Activated B cell treated with CpG ODN at 0.5 μM for 24 hours (primary cell): ENCODE measurements at regions of chr10 and their contacts with region 1.

Region 1: GRCh38 chr10:102678842-102679289 is 34.6 kb downstream of the TRIM8 start:
- DNase-seq: peak; percentile 34
- ATAC-seq: no peak
- H3K4me3 Mint-ChIP-seq: no peak overlapping the region
- H3K27ac Mint-ChIP-seq: no peak overlapping the region
- H3K4me1 Mint-ChIP-seq: peaks cover 34% of the 10 kb centered on the region
- H3K27me3 Mint-ChIP-seq: no peaks in the 10 kb centered on the region
- CTCF ChIP-seq: no peak

Region 2: GRCh38 chr10:102185811-102186527 is 492.9 kb before region 1 on chr10:
- CTCF ChIA-PET with region 1: no interaction called
- POLR2A ChIA-PET with region 1: no interaction called
- intact Hi-C with region 1: no loop called
- DNase-seq: no peak
- ATAC-seq: peak; percentile 40
- H3K4me3 Mint-ChIP-seq: no peak overlapping the region
- H3K27ac Mint-ChIP-seq: no peak overlapping the region
- H3K4me1 Mint-ChIP-seq: peaks cover 16% of the 10 kb centered on the region
- H3K27me3 Mint-ChIP-seq: peaks cover 1% of the 10 kb centered on the region
- CTCF ChIP-seq: no peak

Region 3: DNA sequence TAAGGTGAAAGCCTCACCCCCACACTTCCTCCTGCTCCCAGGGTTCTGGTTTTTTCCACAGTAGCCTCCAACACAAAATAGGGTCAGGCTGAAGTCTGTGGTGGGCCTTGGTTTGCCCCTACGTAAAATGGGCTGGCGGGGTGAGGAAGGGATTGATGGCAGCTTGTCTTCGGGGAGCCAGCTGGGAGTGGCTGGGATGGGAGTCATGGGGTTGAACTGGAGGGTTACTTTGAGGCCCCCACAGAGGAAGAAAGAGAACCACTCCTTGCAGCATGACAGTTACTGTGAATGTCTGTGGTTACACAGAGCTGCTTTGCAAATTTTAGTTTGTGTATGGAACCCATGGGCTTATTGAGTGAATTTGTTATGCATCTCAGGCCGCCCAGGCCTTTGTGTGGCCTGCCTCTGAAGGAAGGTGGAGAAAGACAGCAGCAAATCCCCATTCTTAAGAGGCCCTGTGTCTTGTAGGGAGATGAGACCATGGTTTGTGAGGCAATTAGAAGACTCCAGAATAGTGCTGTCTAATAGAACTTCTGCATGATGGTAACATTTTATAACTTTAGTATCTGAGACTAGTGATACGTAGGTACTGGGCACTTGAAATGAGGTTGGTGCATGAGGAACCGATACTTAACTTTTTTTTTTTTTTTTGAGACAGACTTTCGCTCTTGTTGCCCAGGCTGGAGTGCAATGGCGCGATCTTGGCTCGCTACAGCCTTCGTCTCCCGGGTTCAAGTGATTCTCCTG is 26.5 kb before region 1 on chr10:
- CTCF ChIA-PET with region 1: interaction called, 3 read pairs
- POLR2A ChIA-PET with region 1: interaction called, 78 read pairs
- intact Hi-C with region 1: loop called (anchors 2 kb)
- DNase-seq: no peak
- ATAC-seq: peak; percentile 57
- H3K4me3 Mint-ChIP-seq: peak overlapping the region; percentile 78
- H3K27ac Mint-ChIP-seq: peak overlapping the region; percentile 98
- H3K4me1 Mint-ChIP-seq: peaks cover 68% of the 10 kb centered on the region
- H3K27me3 Mint-ChIP-seq: no peaks in the 10 kb centered on the region
- CTCF ChIP-seq: no peak

Region 4: GRCh38 chr10:102660888-102661657 is 17.8 kb before region 1 on chr10:
- CTCF ChIA-PET with region 1: interaction called, 3 read pairs
- POLR2A ChIA-PET with region 1: interaction called, 13 read pairs
- intact Hi-C with region 1: no loop called
- DNase-seq: no peak
- ATAC-seq: peak; percentile 78
- H3K4me3 Mint-ChIP-seq: no peak overlapping the region
- H3K27ac Mint-ChIP-seq: no peak overlapping the region
- H3K4me1 Mint-ChIP-seq: peaks cover 16% of the 10 kb centered on the region
- H3K27me3 Mint-ChIP-seq: no peaks in the 10 kb centered on the region
- CTCF ChIP-seq: no peak

Region 5: DNA sequence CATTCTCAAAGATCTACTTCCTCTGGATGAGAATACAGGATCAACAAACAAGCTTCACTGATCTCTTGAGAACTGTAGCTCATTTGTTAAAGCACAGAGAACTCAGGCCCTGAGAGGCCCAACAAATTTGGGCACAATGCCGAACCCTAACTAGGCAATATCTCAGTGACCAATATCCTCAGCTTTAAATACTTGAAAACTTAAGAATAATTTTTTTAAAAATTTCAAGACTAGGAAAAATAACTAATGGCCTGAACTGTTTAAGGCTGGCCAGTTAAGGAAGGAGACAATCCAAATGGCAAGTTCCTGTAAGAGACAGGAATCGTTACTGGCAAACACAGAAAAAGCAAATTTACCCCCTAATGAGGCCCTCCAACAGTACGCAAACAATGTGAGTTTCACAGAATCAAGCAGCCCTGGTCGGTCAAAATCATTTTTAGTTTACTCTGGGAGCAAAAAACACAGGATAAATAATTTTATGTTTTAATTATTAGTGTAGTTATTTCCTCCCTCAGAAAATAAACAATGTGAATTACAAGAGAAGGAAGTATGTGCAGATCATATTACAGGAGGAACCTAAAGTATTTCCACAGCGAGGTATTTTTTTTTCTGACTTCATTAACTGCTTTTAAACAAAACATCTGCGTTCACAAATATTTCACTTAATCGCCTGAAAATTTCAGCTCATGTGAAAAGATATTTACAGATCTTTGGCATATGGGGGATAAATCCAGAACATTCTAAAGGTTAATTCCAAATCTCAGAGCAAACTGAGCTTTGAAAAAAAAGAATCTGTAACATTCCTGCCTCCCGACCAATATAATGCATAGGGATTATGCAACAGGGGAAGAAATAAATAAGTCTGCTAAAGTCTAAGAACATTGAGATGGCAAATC is 474.7 kb after region 1 on chr10:
- CTCF ChIA-PET with region 1: no interaction called
- POLR2A ChIA-PET with region 1: no interaction called
- intact Hi-C with region 1: no loop called
- DNase-seq: no peak
- ATAC-seq: no peak
- H3K4me3 Mint-ChIP-seq: no peak overlapping the region
- H3K27ac Mint-ChIP-seq: no peak overlapping the region
- H3K4me1 Mint-ChIP-seq: no peaks in the 10 kb centered on the region
- H3K27me3 Mint-ChIP-seq: no peaks in the 10 kb centered on the region
- CTCF ChIP-seq: no peak